ENCODE measurements at regions of chrX and their contacts with region 1.

Region 1: GRCh38 chrX:31036895-31037294 is 34.9 kb downstream of the FTHL17 start:
- DNase-seq: peak; percentile 27
- ATAC-seq: no peak
- H3K4me3 ChIP-seq: no peak overlapping the region
- H3K27ac ChIP-seq: no peak overlapping the region
- H3K4me1 ChIP-seq: no peaks in the 10 kb centered on the region
- H3K27me3 ChIP-seq: no peaks in the 10 kb centered on the region
- CTCF ChIP-seq: peak; percentile 70

Region 2: GRCh38 chrX:31213941-31214340 is 177.0 kb after region 1 on chrX:
- CTCF ChIA-PET with region 1: no interaction called
- POLR2A ChIA-PET with region 1: no interaction called
- in situ Hi-C with region 1: no loop called
- intact Hi-C with region 1: loop called (anchors 10 kb)
- DNase-seq: no peak
- ATAC-seq: no peak
- H3K4me3 ChIP-seq: no peak overlapping the region
- H3K27ac ChIP-seq: no peak overlapping the region
- H3K4me1 ChIP-seq: no peaks in the 10 kb centered on the region
- H3K27me3 ChIP-seq: no peaks in the 10 kb centered on the region
- CTCF ChIP-seq: peak; percentile 45

Region 3: DNA sequence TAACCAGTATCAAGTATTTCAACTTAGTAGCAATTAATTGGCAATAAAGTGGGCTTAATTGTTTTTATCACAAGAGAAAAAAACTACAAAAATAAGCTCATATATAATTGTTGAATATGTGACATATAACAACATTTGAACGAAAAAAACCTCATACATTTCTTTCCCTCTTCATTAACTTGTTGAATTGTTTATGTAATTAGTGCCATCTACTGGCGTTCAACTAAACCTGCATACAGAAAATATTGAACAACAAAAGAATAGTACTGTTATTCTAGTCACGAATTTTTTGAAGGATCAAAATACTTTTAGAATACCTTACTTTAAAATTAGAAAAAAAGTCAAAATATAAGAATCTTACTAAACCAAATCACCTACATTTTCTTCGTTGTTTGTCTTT is 621.5 kb after region 1 on chrX:
- CTCF ChIA-PET with region 1: no interaction called
- POLR2A ChIA-PET with region 1: no interaction called
- in situ Hi-C with region 1: no loop called
- intact Hi-C with region 1: loop called (anchors 5 kb)
- DNase-seq: peak; percentile 4
- ATAC-seq: no peak
- H3K4me3 ChIP-seq: no peak overlapping the region
- H3K27ac ChIP-seq: no peak overlapping the region
- H3K4me1 ChIP-seq: no peaks in the 10 kb centered on the region
- H3K27me3 ChIP-seq: no peaks in the 10 kb centered on the region
- CTCF ChIP-seq: peak; percentile 14; the same call in 1 of the 2 replicates